ENCODE measurements at regions of chr7 and their contacts with region 1.

Region 1: GRCh38 chr7:106112117-106112971 is at the start of gene SYPL1:
- DNase-seq: peak; percentile 97
- ATAC-seq: peak; percentile 79
- H3K4me3 ChIP-seq: peak within 1 kb of the TSS; percentile 80 to 94 (median 81)
- H3K4me3 Mint-ChIP-seq: peak within 1 kb of the TSS; percentile 95
- H3K27ac ChIP-seq: peak within 1 kb of the TSS; percentile 91 to 95
- H3K27ac Mint-ChIP-seq: peak within 1 kb of the TSS; percentile 96
- H3K4me1 ChIP-seq: peaks cover 66 to 70% of the 10 kb centered on the region in 2 donors
- H3K4me1 Mint-ChIP-seq: peaks cover 74% of the 10 kb centered on the region
- H3K27me3 ChIP-seq: no peaks in the 10 kb centered on the region
- H3K27me3 Mint-ChIP-seq: no peaks in the 10 kb centered on the region
- CTCF ChIP-seq: no peak
- total RNA-seq, gene SYPL1: 126 and 130 TPM in 2 replicates

Region 2: DNA sequence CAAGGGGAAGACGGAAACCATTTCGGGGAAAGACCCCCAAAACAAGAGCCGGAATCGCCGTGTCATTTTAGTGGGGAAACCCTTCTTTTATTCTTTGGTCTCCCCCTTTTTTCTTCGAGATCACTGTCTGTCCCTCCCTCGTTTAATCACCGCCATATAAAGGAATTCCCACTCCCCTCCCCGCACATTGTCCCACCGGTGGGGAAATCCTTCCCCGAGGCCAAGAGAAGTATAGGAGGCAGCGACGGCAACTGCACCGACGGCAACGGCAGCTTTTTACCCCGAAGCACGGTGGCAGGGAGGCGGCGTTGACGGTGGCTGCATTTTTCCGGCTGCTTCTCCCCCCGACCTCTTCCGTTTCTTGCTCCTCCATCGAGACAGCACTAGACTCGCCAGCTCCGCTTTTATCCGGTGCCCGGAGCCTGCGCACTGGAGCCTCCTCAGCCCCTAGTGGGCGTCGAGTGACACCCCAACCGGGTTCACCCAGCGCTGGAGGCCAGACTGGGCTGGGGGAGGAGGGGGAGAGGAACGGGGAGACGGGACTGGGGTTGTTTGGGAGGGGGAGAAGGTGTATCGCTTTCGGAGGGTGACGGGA is 1099.0 kb before region 1 on chr7:
- CTCF ChIA-PET with region 1: no interaction called
- POLR2A ChIA-PET with region 1: interaction called, 4 read pairs
- intact Hi-C with region 1: loop called (anchors 10 kb)
- DNase-seq: peak; percentile 95
- ATAC-seq: peak; percentile 57
- H3K4me3 ChIP-seq: peak overlapping the region; percentile 95 to 99 (median 97)
- H3K4me3 Mint-ChIP-seq: peak overlapping the region; percentile 99
- H3K27ac ChIP-seq: peak overlapping the region; percentile 100
- H3K27ac Mint-ChIP-seq: peak overlapping the region; percentile 100
- H3K4me1 ChIP-seq: peaks cover 33 to 52% of the 10 kb centered on the region in 2 donors
- H3K4me1 Mint-ChIP-seq: peaks cover 56% of the 10 kb centered on the region
- H3K27me3 ChIP-seq: no peaks in the 10 kb centered on the region
- H3K27me3 Mint-ChIP-seq: no peaks in the 10 kb centered on the region
- CTCF ChIP-seq: peak; percentile 59

Region 3: GRCh38 chr7:105876091-105876963 is 236.0 kb before region 1 on chr7 and contains the start of gene ATXN7L1:
- CTCF ChIA-PET with region 1: no interaction called
- POLR2A ChIA-PET with region 1: no interaction called
- intact Hi-C with region 1: loop called (anchors 5 kb)
- DNase-seq: peak; percentile 87
- ATAC-seq: peak; percentile 99
- H3K4me3 ChIP-seq: peak within 1 kb of the TSS; percentile 47 to 68 (median 64)
- H3K4me3 Mint-ChIP-seq: peak within 1 kb of the TSS; percentile 90
- H3K27ac ChIP-seq: no peak within 1 kb of the TSS
- H3K27ac Mint-ChIP-seq: peak within 1 kb of the TSS; percentile 42
- H3K4me1 ChIP-seq: peaks cover 13 to 15% of the 10 kb centered on the region in 2 donors
- H3K4me1 Mint-ChIP-seq: peaks cover 23% of the 10 kb centered on the region
- H3K27me3 ChIP-seq: peaks cover 0 to 25% (median 8%) of the 10 kb centered on the region in 4 experiments
- H3K27me3 Mint-ChIP-seq: peaks cover 14% of the 10 kb centered on the region
- CTCF ChIP-seq: peak; percentile 31
- total RNA-seq, gene ATXN7L1: 37.0 and 40.6 TPM in 2 replicates

Region 4: GRCh38 chr7:105952917-105953595 is 159.3 kb before region 1 on chr7:
- CTCF ChIA-PET with region 1: no interaction called
- POLR2A ChIA-PET with region 1: no interaction called
- intact Hi-C with region 1: no loop called
- DNase-seq: no peak
- ATAC-seq: no peak
- H3K4me3 ChIP-seq: no peak overlapping the region
- H3K4me3 Mint-ChIP-seq: no peak overlapping the region
- H3K27ac ChIP-seq: no peak overlapping the region
- H3K27ac Mint-ChIP-seq: no peak overlapping the region
- H3K4me1 ChIP-seq: no peaks in the 10 kb centered on the region
- H3K4me1 Mint-ChIP-seq: no peaks in the 10 kb centered on the region
- H3K27me3 ChIP-seq: peaks cover 0 to 5% (median 0%) of the 10 kb centered on the region in 4 experiments
- H3K27me3 Mint-ChIP-seq: no peaks in the 10 kb centered on the region
- CTCF ChIP-seq: no peak

Region 5: DNA sequence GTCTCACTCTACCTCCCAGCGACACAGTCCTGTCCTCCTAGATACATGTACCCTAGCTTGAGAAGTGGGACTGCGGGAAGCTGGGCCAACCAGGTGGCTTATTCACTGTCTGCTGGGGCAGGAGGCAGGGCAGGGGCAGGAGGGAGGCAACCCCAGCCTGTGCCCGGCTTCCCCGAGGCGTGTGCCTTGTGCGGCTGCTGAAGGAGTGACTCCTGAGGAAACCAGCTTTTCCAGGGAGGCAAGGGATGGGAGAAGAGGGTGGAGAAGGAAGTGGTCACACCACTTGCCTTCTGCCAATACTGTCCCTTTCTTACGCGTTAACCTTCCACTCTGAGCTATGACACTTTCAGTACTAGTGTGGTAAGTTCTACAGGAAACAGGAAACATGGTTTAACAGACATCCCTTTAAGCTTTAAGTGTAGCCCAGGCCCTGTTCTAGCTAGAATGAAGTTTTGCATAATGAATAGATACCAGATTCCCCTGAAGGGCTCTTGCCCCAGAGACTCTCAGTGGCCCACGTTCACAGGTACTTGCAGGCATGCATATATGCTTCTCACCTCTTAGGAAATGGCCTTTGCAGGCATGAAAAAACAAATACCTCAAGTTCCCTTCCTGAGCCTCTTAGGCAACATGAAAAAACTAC is 40.9 kb before region 1 on chr7:
- CTCF ChIA-PET with region 1: interaction called, 53 read pairs
- POLR2A ChIA-PET with region 1: interaction called, 51 read pairs
- intact Hi-C with region 1: loop called (anchors 1 kb)
- DNase-seq: peak; percentile 90
- ATAC-seq: peak; percentile 87
- H3K4me3 ChIP-seq: peak overlapping the region in 4 of 5 experiments; percentile 33 to 66 (median 45)
- H3K4me3 Mint-ChIP-seq: peak overlapping the region; percentile 85
- H3K27ac ChIP-seq: peak overlapping the region; percentile 95 to 97
- H3K27ac Mint-ChIP-seq: peak overlapping the region; percentile 99
- H3K4me1 ChIP-seq: peaks cover 96 to 100% of the 10 kb centered on the region in 2 donors
- H3K4me1 Mint-ChIP-seq: peaks cover 94% of the 10 kb centered on the region
- H3K27me3 ChIP-seq: no peaks in the 10 kb centered on the region
- H3K27me3 Mint-ChIP-seq: no peaks in the 10 kb centered on the region
- CTCF ChIP-seq: no peak

Region 6: GRCh38 chr7:106094800-106095199 is 17.5 kb before region 1 on chr7:
- CTCF ChIA-PET with region 1: interaction called, 14 read pairs
- POLR2A ChIA-PET with region 1: interaction called, 11 read pairs
- intact Hi-C with region 1: loop called (anchors 2 kb)
- DNase-seq: peak; percentile 51
- ATAC-seq: peak; percentile 60
- H3K4me3 ChIP-seq: no peak overlapping the region
- H3K4me3 Mint-ChIP-seq: no peak overlapping the region
- H3K27ac ChIP-seq: peak overlapping the region in 1 of 2 donors; percentile 77
- H3K27ac Mint-ChIP-seq: peak overlapping the region; percentile 54
- H3K4me1 ChIP-seq: peaks cover 32 to 61% of the 10 kb centered on the region in 2 donors
- H3K4me1 Mint-ChIP-seq: peaks cover 67% of the 10 kb centered on the region
- H3K27me3 ChIP-seq: no peaks in the 10 kb centered on the region
- H3K27me3 Mint-ChIP-seq: no peaks in the 10 kb centered on the region
- CTCF ChIP-seq: peak; percentile 24

Region 7: GRCh38 chr7:106285051-106285854 is 172.9 kb after region 1 on chr7:
- CTCF ChIA-PET with region 1: no interaction called
- POLR2A ChIA-PET with region 1: interaction called, 6 read pairs
- intact Hi-C with region 1: loop called (anchors 1 kb)
- DNase-seq: peak; percentile 100
- ATAC-seq: peak; percentile 87
- H3K4me3 ChIP-seq: peak overlapping the region; percentile 79 to 100 (median 89)
- H3K4me3 Mint-ChIP-seq: peak overlapping the region; percentile 97
- H3K27ac ChIP-seq: peak overlapping the region; percentile 84 to 87
- H3K27ac Mint-ChIP-seq: peak overlapping the region; percentile 98
- H3K4me1 ChIP-seq: peaks cover 10 to 20% of the 10 kb centered on the region in 2 donors
- H3K4me1 Mint-ChIP-seq: peaks cover 31% of the 10 kb centered on the region
- H3K27me3 ChIP-seq: no peaks in the 10 kb centered on the region
- H3K27me3 Mint-ChIP-seq: no peaks in the 10 kb centered on the region
- CTCF ChIP-seq: no peak